A673 (cell line): ENCODE measurements at regions of chr7 and their contacts with region 1.

Region 1: GRCh38 chr7:134935701-134936100 is 50.6 kb upstream of the AGBL3 start:
- DNase-seq: no peak
- H3K4me3 ChIP-seq: no peak overlapping the region
- H3K27ac ChIP-seq: no peak overlapping the region
- H3K4me1 ChIP-seq: no peaks in the 10 kb centered on the region
- H3K27me3 ChIP-seq: no peaks in the 10 kb centered on the region
- CTCF ChIP-seq: no peak

Region 2: GRCh38 chr7:134710859-134711624 is 224.7 kb before region 1 on chr7:
- CTCF ChIA-PET with region 1: no interaction called
- POLR2A ChIA-PET with region 1: no interaction called
- intact Hi-C with region 1: loop called (anchors 5 kb)
- DNase-seq: no peak
- H3K4me3 ChIP-seq: no peak overlapping the region
- H3K27ac ChIP-seq: no peak overlapping the region
- H3K4me1 ChIP-seq: no peaks in the 10 kb centered on the region
- H3K27me3 ChIP-seq: no peaks in the 10 kb centered on the region
- CTCF ChIP-seq: no peak

Region 3: GRCh38 chr7:135801045-135801693 is 865.5 kb after region 1 on chr7:
- CTCF ChIA-PET with region 1: no interaction called
- POLR2A ChIA-PET with region 1: no interaction called
- intact Hi-C with region 1: no loop called
- DNase-seq: peak; percentile 84
- H3K4me3 ChIP-seq: no peak overlapping the region
- H3K27ac ChIP-seq: no peak overlapping the region
- H3K4me1 ChIP-seq: peaks cover 6% of the 10 kb centered on the region
- H3K27me3 ChIP-seq: no peaks in the 10 kb centered on the region
- CTCF ChIP-seq: peak; percentile 87